Activated CD4-positive, alpha-beta memory T cell treated with anti-CD3 and anti-CD28 coated beads for 36 hours (primary cell): ENCODE measurements at regions of chr2 and their contacts with region 1.

Region 1: GRCh38 chr2:177289824-177290628 is 25.5 kb upstream of the NFE2L2 start:
- DNase-seq: peak; percentile 43
- H3K4me3 Mint-ChIP-seq: no peak overlapping the region
- H3K27ac Mint-ChIP-seq: peak overlapping the region; percentile 87
- H3K4me1 Mint-ChIP-seq: peaks cover 29% of the 10 kb centered on the region
- H3K27me3 Mint-ChIP-seq: no peaks in the 10 kb centered on the region

Region 2: GRCh38 chr2:177229448-177230242 is 60.4 kb before region 1 on chr2:
- CTCF ChIA-PET with region 1: no interaction called
- POLR2A ChIA-PET with region 1: interaction called, 3 read pairs
- intact Hi-C with region 1: loop called (anchors 5 kb)
- DNase-seq: no peak
- H3K4me3 Mint-ChIP-seq: no peak overlapping the region
- H3K27ac Mint-ChIP-seq: peak overlapping the region; percentile 77
- H3K4me1 Mint-ChIP-seq: peaks cover 55% of the 10 kb centered on the region
- H3K27me3 Mint-ChIP-seq: no peaks in the 10 kb centered on the region

Region 3: DNA sequence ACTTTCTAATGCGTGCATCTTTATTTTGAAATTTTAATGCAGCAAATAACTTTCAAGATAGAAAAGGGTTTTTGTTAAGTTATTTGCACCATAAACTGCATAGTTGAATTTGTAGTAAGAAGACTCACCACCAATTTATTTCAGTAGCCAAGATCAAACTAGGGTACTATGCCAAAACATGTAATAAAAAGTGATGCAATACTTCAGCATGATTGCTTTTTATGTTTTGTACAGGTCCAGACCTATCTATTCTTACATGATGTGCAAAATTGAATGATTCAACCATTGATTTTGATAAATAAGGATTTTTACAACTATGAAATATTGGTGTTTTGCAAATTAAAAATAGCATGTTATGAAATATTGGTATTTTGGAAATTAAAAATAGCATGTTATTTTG is 129.2 kb after region 1 on chr2:
- CTCF ChIA-PET with region 1: no interaction called
- POLR2A ChIA-PET with region 1: no interaction called
- intact Hi-C with region 1: no loop called
- DNase-seq: no peak
- H3K4me3 Mint-ChIP-seq: no peak overlapping the region
- H3K27ac Mint-ChIP-seq: no peak overlapping the region
- H3K4me1 Mint-ChIP-seq: peaks cover 33% of the 10 kb centered on the region
- H3K27me3 Mint-ChIP-seq: no peaks in the 10 kb centered on the region

Region 4: GRCh38 chr2:177622521-177622920 is 332.5 kb after region 1 on chr2:
- CTCF ChIA-PET with region 1: no interaction called
- POLR2A ChIA-PET with region 1: no interaction called
- intact Hi-C with region 1: no loop called
- DNase-seq: no peak
- H3K4me3 Mint-ChIP-seq: no peak overlapping the region
- H3K27ac Mint-ChIP-seq: no peak overlapping the region
- H3K4me1 Mint-ChIP-seq: peaks cover 4% of the 10 kb centered on the region
- H3K27me3 Mint-ChIP-seq: peaks cover 6% of the 10 kb centered on the region